Common myeloid progenitor, CD34-positive (primary cell): ENCODE measurements at regions of chr5 and their contacts with region 1.

Region 1: DNA sequence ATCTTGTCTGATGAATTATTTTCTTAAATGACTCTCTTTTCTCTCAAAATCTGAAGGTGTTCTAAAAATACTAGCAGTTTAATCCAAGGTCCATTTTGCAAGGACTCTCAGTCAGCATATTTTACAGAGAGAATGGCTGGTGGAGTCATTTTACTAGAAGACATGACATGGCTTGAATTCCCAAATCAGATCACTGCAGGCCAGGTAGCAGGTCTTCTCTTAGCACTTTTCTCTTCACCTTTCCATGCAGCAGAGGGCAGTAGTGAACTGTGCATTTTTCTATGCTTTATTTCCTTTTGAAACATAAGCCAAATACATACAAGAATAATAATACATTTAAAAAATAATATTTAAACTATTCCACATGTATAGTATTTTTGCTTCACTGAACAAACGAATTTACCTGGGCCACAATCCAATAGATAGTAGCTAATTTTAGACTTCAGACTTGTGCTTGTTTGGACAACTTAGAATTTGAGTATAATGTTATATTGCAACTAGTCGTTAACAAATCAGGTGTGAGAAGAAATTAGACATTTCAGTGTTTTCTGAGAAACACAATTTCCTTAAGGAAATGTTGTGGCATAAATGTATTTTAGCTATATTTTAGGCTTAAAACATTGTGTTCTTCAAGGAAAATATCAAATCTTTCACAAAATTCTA is 289.4 kb upstream of the DAB2 start:
- DNase-seq: peak; percentile 61 to 79 (median 70)
- H3K4me3 ChIP-seq: no peak overlapping the region
- H3K27ac ChIP-seq: no peak overlapping the region
- H3K4me1 ChIP-seq: no peaks in the 10 kb centered on the region
- H3K27me3 ChIP-seq: no peaks in the 10 kb centered on the region

Region 2: GRCh38 chr5:39700523-39700922 is 13.6 kb before region 1 on chr5:
- CTCF ChIA-PET with region 1: interaction called, 24 read pairs
- POLR2A ChIA-PET with region 1: no interaction called
- DNase-seq: peak in 1 of 3 donors; percentile 6
- H3K4me3 ChIP-seq: no peak overlapping the region
- H3K27ac ChIP-seq: no peak overlapping the region
- H3K4me1 ChIP-seq: no peaks in the 10 kb centered on the region
- H3K27me3 ChIP-seq: peaks cover 0 to 2% (median 0%) of the 10 kb centered on the region in 5 experiments

Region 3: GRCh38 chr5:40679155-40679913 is 965.2 kb after region 1 on chr5:
- CTCF ChIA-PET with region 1: interaction called, 37 read pairs
- POLR2A ChIA-PET with region 1: no interaction called
- DNase-seq: peak; percentile 90 to 96 (median 93)
- H3K4me3 ChIP-seq: peak overlapping the region; percentile 84 to 96 (median 90)
- H3K27ac ChIP-seq: peak overlapping the region; percentile 64 to 88
- H3K4me1 ChIP-seq: peaks cover 38 to 70% (median 55%) of the 10 kb centered on the region in 4 experiments
- H3K27me3 ChIP-seq: no peaks in the 10 kb centered on the region

Region 4: DNA sequence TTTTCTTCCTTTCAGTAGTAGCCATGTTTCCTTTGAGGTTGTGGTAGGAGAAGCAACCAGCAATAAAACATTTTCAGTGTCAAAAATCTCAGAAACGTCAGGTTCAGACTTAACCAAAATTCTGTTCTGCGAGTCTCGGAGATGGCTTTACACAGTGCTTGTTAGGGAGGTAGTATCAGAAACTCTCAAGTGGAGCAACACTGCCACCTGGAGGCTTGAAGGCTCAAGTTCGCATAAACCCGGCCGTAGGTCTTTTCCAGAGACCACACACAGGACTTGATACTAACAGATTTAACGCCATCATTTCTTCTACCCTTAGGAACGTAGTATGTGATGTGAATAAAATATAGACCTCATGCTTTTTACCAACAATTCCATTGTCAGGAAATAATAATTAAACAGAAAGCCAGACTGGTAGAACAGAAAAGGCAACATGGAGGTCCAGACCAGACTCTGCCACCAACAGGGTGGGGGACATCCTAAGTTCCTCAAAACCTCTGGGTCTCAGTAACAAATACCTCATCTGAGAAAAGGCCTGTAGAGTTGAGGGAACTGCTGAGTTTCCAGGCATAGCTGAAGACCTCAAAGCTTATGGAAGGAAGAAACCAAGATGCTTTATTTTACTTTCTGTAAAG is 974.1 kb after region 1 on chr5:
- CTCF ChIA-PET with region 1: interaction called, 37 read pairs
- POLR2A ChIA-PET with region 1: interaction called, 3 read pairs
- DNase-seq: peak; percentile 90 to 96 (median 94)
- H3K4me3 ChIP-seq: peak overlapping the region in 2 of 7 experiments; percentile 0 to 42
- H3K27ac ChIP-seq: no peak overlapping the region
- H3K4me1 ChIP-seq: peaks cover 26 to 67% (median 36%) of the 10 kb centered on the region in 4 experiments
- H3K27me3 ChIP-seq: no peaks in the 10 kb centered on the region

Region 5: GRCh38 chr5:40736103-40736875 is 1022.1 kb after region 1 on chr5:
- CTCF ChIA-PET with region 1: interaction called, 79 read pairs
- POLR2A ChIA-PET with region 1: no interaction called
- DNase-seq: peak; percentile 61 to 85 (median 80)
- H3K4me3 ChIP-seq: no peak overlapping the region
- H3K27ac ChIP-seq: no peak overlapping the region
- H3K4me1 ChIP-seq: peaks cover 15 to 44% (median 23%) of the 10 kb centered on the region in 4 experiments
- H3K27me3 ChIP-seq: no peaks in the 10 kb centered on the region